ENCODE measurements at regions of chr17 and their contacts with region 1.

Region 1: DNA sequence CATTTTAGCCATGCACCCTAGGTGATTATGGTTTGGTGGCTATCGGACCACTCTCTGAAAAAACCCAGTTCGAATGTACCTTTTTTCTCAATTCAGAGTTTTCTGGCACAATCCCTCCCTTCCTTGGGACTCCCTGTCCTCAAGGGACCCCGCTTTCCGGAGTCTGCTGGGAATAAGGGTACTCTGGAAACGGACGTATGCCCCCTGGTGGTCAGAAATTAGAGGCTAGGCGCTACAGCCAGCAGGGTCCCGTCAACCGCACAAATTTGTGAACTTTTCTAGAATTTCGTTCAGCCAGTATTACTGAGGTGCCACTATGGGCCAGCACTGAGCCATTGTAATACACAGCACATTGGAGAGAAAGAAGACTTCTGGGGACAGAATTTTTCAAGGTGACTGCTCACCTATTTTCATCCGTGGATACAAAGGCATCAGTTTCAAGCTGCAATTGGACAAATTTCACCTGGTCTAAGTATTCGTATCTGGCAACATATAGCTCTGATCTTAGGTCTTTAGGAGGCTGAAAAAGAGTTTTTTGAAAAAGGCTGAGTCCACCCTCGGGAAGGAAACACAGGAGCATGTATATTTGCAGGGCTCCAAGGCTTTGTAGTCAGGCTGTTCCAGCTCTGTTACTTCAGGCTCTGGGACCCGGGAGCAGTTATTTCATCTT is 27.1 kb upstream of the CRYBA1 start:
- DNase-seq: peak; percentile 64 to 98 (median 88)

Region 2: GRCh38 chr17:29180034-29180787 is 39.3 kb before region 1 on chr17 and contains the start of gene MYO18A:
- intact Hi-C with region 1: loop called (anchors 5 kb)
- DNase-seq: peak in 41 of 42 donors; percentile 60 to 93 (median 86)

Region 3: DNA sequence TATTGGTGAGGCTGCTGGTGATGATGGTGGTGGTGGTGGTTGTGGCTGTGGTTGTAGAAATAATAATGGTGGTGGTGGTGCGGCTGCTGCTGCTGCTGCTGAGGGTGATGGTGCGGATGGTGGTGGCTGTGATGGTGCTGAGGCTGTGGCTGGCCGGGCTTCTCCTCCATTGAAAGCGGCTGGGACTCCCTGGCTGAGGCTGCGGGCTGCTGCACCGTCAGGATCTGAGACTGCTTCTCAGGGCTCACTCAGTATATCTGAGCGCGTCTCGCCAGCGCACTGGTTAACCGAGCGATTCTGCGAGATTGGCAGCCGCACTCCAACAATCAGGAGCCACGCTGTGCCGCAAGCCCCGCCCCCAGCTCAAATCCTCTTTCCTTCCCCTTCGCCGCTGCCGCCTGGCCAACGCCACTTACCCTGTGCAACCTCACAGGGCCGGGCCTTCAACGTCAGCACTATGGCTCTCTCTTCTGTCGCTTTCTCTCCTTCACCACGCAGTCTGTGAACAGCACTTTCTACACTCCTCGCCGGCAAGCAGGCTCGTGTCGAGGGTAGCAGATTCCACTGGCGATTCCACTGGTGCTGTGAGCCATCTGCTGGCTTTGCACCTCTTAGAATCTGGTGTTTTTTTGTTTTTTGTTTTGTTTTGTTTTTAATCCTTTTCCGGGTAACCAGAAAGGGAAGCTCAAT is 74.5 kb after region 1 on chr17 and contains the start of gene NUFIP2:
- intact Hi-C with region 1: loop called (anchors 5 kb)
- DNase-seq: peak; percentile 98 to 100 (median 100)

Measured in head of caudate nucleus (tissue), 42 donors.